B cell (primary cell): ENCODE measurements at regions of chr10 and their contacts with region 1.

Region 1: DNA sequence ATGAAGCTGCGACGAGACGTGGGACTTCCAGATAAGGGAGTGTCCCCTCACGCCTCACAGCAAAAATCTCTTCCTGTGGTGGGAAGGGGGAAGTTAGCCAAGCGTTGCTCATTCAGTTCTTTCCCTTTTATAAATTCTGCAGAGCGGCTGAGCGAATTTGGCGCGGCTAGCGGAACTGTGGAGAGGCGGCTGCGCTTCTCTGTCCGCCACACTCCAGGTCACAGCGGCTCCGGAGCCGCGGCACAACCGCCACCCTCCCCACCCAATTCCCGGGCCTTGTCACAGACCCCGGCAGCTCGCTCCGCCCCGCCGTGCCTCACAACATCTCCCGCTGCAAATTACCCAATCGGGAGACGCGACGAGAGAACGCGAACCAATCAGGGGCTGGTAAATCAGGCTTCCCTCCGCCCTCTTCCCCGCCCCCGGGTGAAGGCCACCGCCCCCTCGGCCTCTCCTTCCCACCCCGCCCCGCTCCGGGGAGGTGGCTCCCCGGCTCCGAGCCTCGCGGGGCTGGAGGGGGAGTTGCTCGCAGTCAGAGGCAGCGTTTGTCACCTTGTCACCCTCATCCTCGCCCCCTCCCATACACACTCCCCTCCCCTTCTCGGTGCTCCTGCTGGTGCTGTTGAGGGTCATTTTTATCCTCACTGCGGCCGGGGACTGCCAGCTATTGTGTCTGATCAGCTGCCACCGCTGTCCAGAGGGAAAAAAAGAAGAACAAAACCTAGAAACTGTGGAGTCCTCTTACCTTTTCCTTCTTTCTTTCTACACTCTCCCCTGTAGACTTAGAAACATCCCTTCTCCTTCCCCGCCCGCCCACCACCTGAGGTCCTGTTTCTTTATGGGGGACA is 918 bp upstream of the ARHGAP21 start:
- DNase-seq: peak; percentile 94
- ATAC-seq: peak; percentile 84
- H3K4me3 ChIP-seq: peak overlapping the region; percentile 54 to 90 (median 86)
- H3K4me3 Mint-ChIP-seq: peak overlapping the region; percentile 96
- H3K27ac ChIP-seq: peak overlapping the region; percentile 54
- H3K27ac Mint-ChIP-seq: peak overlapping the region; percentile 94
- H3K4me1 ChIP-seq: peaks cover 18 to 27% of the 10 kb centered on the region in 2 donors
- H3K4me1 Mint-ChIP-seq: peaks cover 27% of the 10 kb centered on the region
- H3K27me3 ChIP-seq: peaks cover 0 to 10% (median 0%) of the 10 kb centered on the region in 4 experiments
- H3K27me3 Mint-ChIP-seq: no peaks in the 10 kb centered on the region
- CTCF ChIP-seq: no peak

Region 2: DNA sequence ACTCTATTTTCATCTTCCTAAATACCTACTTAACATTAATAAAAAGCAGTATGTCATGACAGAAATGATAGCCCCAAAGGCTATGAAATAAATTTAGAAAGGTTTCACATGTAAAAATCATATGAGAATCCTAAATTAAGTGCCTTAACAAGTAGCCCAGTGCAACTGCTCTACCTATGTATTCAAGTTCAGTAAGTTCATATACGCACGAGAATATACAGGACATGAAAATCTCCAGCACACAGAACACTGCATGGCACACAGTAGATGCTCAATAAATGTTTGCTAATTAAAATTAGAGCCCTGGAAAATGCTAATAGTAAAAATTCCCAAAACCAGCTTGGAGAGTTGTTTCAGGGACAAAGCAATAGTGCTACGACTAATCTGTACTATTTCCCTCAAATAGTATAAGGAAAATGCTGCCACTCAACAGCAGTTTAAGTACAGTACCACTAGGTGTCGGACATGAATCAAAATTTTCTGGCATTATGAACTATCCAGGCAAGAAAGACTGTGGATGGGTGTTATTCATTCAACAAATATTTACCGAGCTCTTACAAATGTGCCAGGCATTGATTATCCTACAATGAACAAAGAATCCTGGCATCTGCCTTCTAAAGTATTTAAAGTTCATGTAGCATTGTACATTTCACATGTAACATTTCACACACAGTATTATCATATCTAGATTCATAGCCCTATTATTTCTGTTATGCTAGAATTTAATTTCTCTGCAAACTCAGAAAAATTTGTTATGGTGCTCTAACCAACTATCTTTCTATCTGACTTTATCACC is 81.8 kb before region 1 on chr10:
- CTCF ChIA-PET with region 1: no interaction called
- POLR2A ChIA-PET with region 1: no interaction called
- intact Hi-C with region 1: loop called (anchors 1 kb)
- DNase-seq: peak; percentile 57
- ATAC-seq: peak; percentile 67
- H3K4me3 ChIP-seq: no peak overlapping the region
- H3K4me3 Mint-ChIP-seq: no peak overlapping the region
- H3K27ac ChIP-seq: no peak overlapping the region
- H3K27ac Mint-ChIP-seq: no peak overlapping the region
- H3K4me1 ChIP-seq: no peaks in the 10 kb centered on the region
- H3K4me1 Mint-ChIP-seq: peaks cover 3% of the 10 kb centered on the region
- H3K27me3 ChIP-seq: no peaks in the 10 kb centered on the region
- H3K27me3 Mint-ChIP-seq: no peaks in the 10 kb centered on the region
- CTCF ChIP-seq: peak; percentile 81

Region 3: GRCh38 chr10:24887855-24888231 is 163.2 kb after region 1 on chr10:
- CTCF ChIA-PET with region 1: no interaction called
- POLR2A ChIA-PET with region 1: no interaction called
- intact Hi-C with region 1: loop called (anchors 2 kb)
- DNase-seq: no peak
- ATAC-seq: peak; percentile 5
- H3K4me3 ChIP-seq: peak overlapping the region in 2 of 5 experiments; percentile 11 to 37
- H3K4me3 Mint-ChIP-seq: peak overlapping the region; percentile 64
- H3K27ac ChIP-seq: peak overlapping the region in 1 of 2 donors; percentile 74
- H3K27ac Mint-ChIP-seq: peak overlapping the region; percentile 60
- H3K4me1 ChIP-seq: peaks cover 20 to 37% of the 10 kb centered on the region in 2 donors
- H3K4me1 Mint-ChIP-seq: peaks cover 44% of the 10 kb centered on the region
- H3K27me3 ChIP-seq: no peaks in the 10 kb centered on the region
- H3K27me3 Mint-ChIP-seq: no peaks in the 10 kb centered on the region
- CTCF ChIP-seq: no peak

Region 4: GRCh38 chr10:24920907-24921881 is 196.6 kb after region 1 on chr10:
- CTCF ChIA-PET with region 1: no interaction called
- POLR2A ChIA-PET with region 1: no interaction called
- intact Hi-C with region 1: no loop called
- DNase-seq: no peak
- ATAC-seq: no peak
- H3K4me3 ChIP-seq: no peak overlapping the region
- H3K4me3 Mint-ChIP-seq: no peak overlapping the region
- H3K27ac ChIP-seq: no peak overlapping the region
- H3K27ac Mint-ChIP-seq: no peak overlapping the region
- H3K4me1 ChIP-seq: no peaks in the 10 kb centered on the region
- H3K4me1 Mint-ChIP-seq: no peaks in the 10 kb centered on the region
- H3K27me3 ChIP-seq: no peaks in the 10 kb centered on the region
- H3K27me3 Mint-ChIP-seq: no peaks in the 10 kb centered on the region
- CTCF ChIP-seq: no peak

Region 5: DNA sequence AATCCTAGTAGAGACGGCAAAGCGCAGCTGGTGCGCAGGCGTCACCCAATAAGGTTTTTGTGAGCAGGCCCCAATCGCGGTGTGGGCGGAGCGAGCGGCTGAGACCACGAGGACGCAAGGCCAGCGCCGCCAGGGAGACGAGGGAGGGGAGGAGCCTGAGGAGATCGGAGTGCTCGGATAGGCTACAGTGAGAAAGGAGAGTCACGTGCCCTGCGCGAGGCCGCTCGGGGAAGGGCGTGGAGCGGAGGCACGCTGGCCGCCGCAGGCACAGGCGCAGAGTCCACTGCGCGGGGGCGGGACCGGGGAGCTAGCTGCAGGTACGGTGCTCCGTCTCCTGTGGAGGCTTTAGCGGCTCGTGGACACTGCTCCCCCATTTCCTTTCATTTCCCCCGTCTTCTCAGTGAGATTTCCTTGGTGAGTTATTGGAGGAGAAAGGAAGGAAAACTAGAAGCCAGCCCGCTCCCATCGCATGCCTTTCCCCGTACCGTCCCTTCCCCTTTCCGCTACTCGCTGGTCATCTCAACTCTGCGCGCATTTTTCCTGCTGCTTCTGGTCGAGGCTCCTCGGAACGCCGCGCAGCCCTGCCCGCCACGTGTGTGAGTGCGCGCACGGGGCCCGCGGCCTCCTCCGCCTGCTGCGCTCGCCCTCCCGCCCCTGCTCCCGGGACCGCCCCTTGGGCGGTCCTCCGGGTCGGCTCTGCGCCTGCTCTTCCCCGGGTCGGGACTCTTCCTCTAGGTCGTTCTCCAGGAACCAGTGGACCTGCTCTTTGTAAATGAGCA is 292.0 kb after region 1 on chr10 and contains the start of gene THNSL1:
- CTCF ChIA-PET with region 1: no interaction called
- POLR2A ChIA-PET with region 1: interaction called, 3 read pairs
- intact Hi-C with region 1: loop called (anchors 1 kb)
- DNase-seq: peak; percentile 97
- ATAC-seq: peak; percentile 95
- H3K4me3 ChIP-seq: peak within 1 kb of the TSS; percentile 65 to 90 (median 72)
- H3K4me3 Mint-ChIP-seq: peak within 1 kb of the TSS; percentile 95
- H3K27ac ChIP-seq: peak within 1 kb of the TSS; percentile 79 to 96
- H3K27ac Mint-ChIP-seq: peak within 1 kb of the TSS; percentile 97
- H3K4me1 ChIP-seq: peaks cover 14 to 16% of the 10 kb centered on the region in 2 donors
- H3K4me1 Mint-ChIP-seq: peaks cover 22% of the 10 kb centered on the region
- H3K27me3 ChIP-seq: no peaks in the 10 kb centered on the region
- H3K27me3 Mint-ChIP-seq: no peaks in the 10 kb centered on the region
- CTCF ChIP-seq: no peak
- total RNA-seq, gene THNSL1: 4.3 and 4.9 TPM in 2 replicates

Region 6: GRCh38 chr10:25080880-25081581 is 356.4 kb after region 1 on chr10:
- CTCF ChIA-PET with region 1: interaction called, 9 read pairs
- POLR2A ChIA-PET with region 1: no interaction called
- intact Hi-C with region 1: loop called (anchors 10 kb)
- DNase-seq: peak; percentile 59
- ATAC-seq: no peak
- H3K4me3 ChIP-seq: no peak overlapping the region
- H3K4me3 Mint-ChIP-seq: no peak overlapping the region
- H3K27ac ChIP-seq: no peak overlapping the region
- H3K27ac Mint-ChIP-seq: no peak overlapping the region
- H3K4me1 ChIP-seq: peaks cover 0 to 3% of the 10 kb centered on the region in 2 donors
- H3K4me1 Mint-ChIP-seq: no peaks in the 10 kb centered on the region
- H3K27me3 ChIP-seq: no peaks in the 10 kb centered on the region
- H3K27me3 Mint-ChIP-seq: peaks cover 15% of the 10 kb centered on the region
- CTCF ChIP-seq: peak; percentile 79